ENCODE measurements at regions of chr11 and their contacts with region 1.

Region 1: DNA sequence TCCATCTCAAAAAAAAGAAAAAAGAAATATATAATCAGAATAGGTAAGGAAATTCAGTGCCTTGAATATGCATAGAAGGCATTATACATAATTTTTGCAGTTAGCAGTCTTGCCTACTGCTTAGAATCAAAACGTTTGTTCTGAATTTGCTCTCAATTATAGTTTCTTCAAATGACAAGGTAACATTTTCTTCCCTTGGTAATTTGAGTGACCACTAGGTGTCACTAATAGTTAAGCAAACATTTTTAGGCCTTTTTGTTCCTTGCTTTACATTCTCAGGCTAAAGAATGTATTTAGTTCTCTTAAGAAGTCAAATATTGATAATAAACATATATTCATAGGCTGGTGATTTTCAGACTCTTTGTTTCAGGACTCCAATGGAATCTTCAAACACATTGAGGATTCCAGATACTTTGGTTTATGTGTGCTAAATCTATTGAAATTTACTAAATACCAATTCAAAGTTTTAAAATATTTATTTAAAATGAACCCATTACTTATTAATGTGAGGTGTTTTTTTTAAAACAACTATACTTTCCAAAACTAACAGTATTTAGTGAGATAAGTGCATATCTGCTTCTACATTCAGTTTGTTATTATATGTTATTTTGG is 55.0 kb upstream of the DEPDC7 start:
- DNase-seq: peak; percentile 24
- ATAC-seq: peak; percentile 53; the same call in 1 of the 2 replicates
- H3K4me3 ChIP-seq: no peak overlapping the region
- H3K27ac ChIP-seq: no peak overlapping the region
- H3K4me1 ChIP-seq: no peaks in the 10 kb centered on the region
- H3K27me3 ChIP-seq: no peaks in the 10 kb centered on the region
- CTCF ChIP-seq: peak; percentile 71; the same call in 1 of the 2 replicates

Region 2: DNA sequence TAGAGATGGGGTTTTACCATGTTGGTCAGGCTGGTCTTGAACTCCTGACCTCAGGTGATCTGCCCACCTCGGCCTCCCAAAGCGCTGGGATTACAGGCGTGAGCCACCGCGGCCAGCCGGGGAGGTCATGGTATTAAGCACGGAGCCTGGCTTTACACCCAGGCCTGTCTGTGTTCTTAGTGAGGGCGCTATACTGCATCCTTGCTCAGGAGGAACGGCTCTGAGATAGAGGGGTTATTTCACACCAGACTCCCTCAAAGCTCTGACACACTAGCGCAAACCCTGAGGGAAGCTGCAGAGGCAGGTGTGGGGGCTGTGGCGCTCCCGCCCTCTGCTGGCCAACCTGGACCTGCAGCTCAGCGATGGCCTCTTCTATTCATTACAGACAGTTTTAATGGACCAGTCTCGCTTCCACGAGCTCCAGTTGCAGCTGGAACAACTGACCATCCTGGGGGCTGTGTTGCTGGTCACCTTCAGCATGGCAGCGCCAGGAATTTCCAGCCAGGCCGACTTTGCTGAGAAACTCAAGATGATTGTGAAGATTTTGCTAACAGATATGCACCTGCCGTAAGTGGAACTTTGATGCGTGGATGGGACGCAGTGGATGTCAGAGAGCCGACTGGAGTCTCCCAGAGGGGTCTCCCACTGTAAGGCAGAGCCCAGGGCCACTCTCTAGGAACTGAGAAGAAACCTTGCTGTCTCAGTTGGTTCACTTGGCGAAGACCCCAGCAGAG is 105.0 kb after region 1 on chr11:
- CTCF ChIA-PET with region 1: no interaction called
- POLR2A ChIA-PET with region 1: no interaction called
- in situ Hi-C with region 1: no loop called
- intact Hi-C with region 1: loop called (anchors 5 kb)
- DNase-seq: peak; percentile 12
- ATAC-seq: peak; percentile 94
- H3K4me3 ChIP-seq: no peak overlapping the region
- H3K27ac ChIP-seq: no peak overlapping the region
- H3K4me1 ChIP-seq: no peaks in the 10 kb centered on the region
- H3K27me3 ChIP-seq: no peaks in the 10 kb centered on the region
- CTCF ChIP-seq: peak; percentile 97

Region 3: GRCh38 chr11:33808228-33808828 is 847.7 kb after region 1 on chr11:
- CTCF ChIA-PET with region 1: interaction called, 10 read pairs
- POLR2A ChIA-PET with region 1: no interaction called
- in situ Hi-C with region 1: no loop called
- intact Hi-C with region 1: no loop called
- DNase-seq: no peak
- ATAC-seq: peak; percentile 97
- H3K4me3 ChIP-seq: no peak overlapping the region
- H3K27ac ChIP-seq: no peak overlapping the region
- H3K4me1 ChIP-seq: no peaks in the 10 kb centered on the region
- H3K27me3 ChIP-seq: no peaks in the 10 kb centered on the region
- CTCF ChIP-seq: peak; percentile 93